A673 (cell line): ENCODE measurements at regions of chr16 and their contacts with region 1.

Region 1: DNA sequence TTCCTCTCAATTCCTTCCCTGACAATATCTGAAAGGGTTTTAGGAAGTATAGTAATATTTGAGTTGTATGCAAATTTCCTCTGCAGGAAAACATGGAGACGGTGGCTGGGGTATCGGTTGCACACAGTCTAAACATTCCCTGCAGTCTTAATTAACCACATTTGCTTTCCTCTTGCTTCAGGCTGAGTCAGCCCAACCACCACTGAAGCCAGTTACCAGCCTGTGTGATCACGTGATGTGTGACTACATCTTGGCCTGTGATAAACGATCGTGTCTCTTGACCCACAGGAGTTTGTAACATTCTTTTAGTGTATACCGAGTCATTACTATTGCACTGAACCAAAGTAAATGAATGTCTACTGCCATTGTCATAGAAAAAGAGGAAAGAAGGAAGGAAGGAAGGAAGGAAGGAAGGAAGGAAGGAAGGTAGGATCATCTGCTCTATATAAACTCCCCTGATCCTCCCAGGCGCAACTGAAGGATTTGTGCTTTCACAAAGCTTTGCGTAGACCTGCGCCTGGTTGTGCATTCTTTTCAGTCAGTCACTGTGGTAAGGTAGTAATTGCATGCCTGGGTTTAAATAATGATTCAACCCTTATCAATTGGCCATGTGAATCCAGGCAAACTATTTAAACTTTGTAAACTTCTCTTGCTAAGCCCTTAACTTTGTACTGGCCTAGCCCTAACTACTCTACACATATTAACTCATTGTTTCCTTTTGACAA is 280.6 kb upstream of the SALL1 start:
- DNase-seq: peak; percentile 97
- H3K4me3 ChIP-seq: no peak overlapping the region
- H3K27ac ChIP-seq: peak overlapping the region; percentile 87
- H3K4me1 ChIP-seq: peaks cover 35% of the 10 kb centered on the region
- H3K27me3 ChIP-seq: no peaks in the 10 kb centered on the region
- CTCF ChIP-seq: no peak

Region 2: GRCh38 chr16:50830698-50831097 is 601.0 kb before region 1 on chr16:
- CTCF ChIA-PET with region 1: no interaction called
- POLR2A ChIA-PET with region 1: no interaction called
- intact Hi-C with region 1: no loop called
- DNase-seq: no peak
- H3K4me3 ChIP-seq: no peak overlapping the region
- H3K27ac ChIP-seq: no peak overlapping the region
- H3K4me1 ChIP-seq: no peaks in the 10 kb centered on the region
- H3K27me3 ChIP-seq: peaks cover 17% of the 10 kb centered on the region
- CTCF ChIP-seq: no peak

Region 3: GRCh38 chr16:51151961-51152663 is 279.6 kb before region 1 on chr16:
- CTCF ChIA-PET with region 1: no interaction called
- POLR2A ChIA-PET with region 1: no interaction called
- intact Hi-C with region 1: loop called (anchors 5 kb)
- DNase-seq: peak; percentile 88
- H3K4me3 ChIP-seq: peak overlapping the region; percentile 70
- H3K27ac ChIP-seq: peak overlapping the region; percentile 68
- H3K4me1 ChIP-seq: peaks cover 19% of the 10 kb centered on the region
- H3K27me3 ChIP-seq: peaks cover 41% of the 10 kb centered on the region
- CTCF ChIP-seq: no peak

Region 4: GRCh38 chr16:51569203-51569931 is 137.7 kb after region 1 on chr16:
- CTCF ChIA-PET with region 1: no interaction called
- POLR2A ChIA-PET with region 1: no interaction called
- intact Hi-C with region 1: loop called (anchors 2 kb)
- DNase-seq: peak; percentile 97
- H3K4me3 ChIP-seq: no peak overlapping the region
- H3K27ac ChIP-seq: peak overlapping the region; percentile 46
- H3K4me1 ChIP-seq: peaks cover 32% of the 10 kb centered on the region
- H3K27me3 ChIP-seq: no peaks in the 10 kb centered on the region
- CTCF ChIP-seq: no peak

Region 5: GRCh38 chr16:51624080-51624775 is 192.5 kb after region 1 on chr16:
- CTCF ChIA-PET with region 1: no interaction called
- POLR2A ChIA-PET with region 1: no interaction called
- intact Hi-C with region 1: loop called (anchors 5 kb)
- DNase-seq: peak; percentile 93
- H3K4me3 ChIP-seq: no peak overlapping the region
- H3K27ac ChIP-seq: peak overlapping the region; percentile 72
- H3K4me1 ChIP-seq: peaks cover 24% of the 10 kb centered on the region
- H3K27me3 ChIP-seq: no peaks in the 10 kb centered on the region
- CTCF ChIP-seq: no peak

Region 6: GRCh38 chr16:51762081-51762996 is 330.7 kb after region 1 on chr16:
- CTCF ChIA-PET with region 1: no interaction called
- POLR2A ChIA-PET with region 1: no interaction called
- intact Hi-C with region 1: loop called (anchors 1 kb)
- DNase-seq: peak; percentile 92
- H3K4me3 ChIP-seq: peak overlapping the region; percentile 13
- H3K27ac ChIP-seq: peak overlapping the region; percentile 34
- H3K4me1 ChIP-seq: peaks cover 55% of the 10 kb centered on the region
- H3K27me3 ChIP-seq: no peaks in the 10 kb centered on the region
- CTCF ChIP-seq: peak; percentile 98

Region 7: GRCh38 chr16:51773521-51773920 is 341.8 kb after region 1 on chr16:
- CTCF ChIA-PET with region 1: no interaction called
- POLR2A ChIA-PET with region 1: no interaction called
- intact Hi-C with region 1: no loop called
- DNase-seq: no peak
- H3K4me3 ChIP-seq: no peak overlapping the region
- H3K27ac ChIP-seq: no peak overlapping the region
- H3K4me1 ChIP-seq: no peaks in the 10 kb centered on the region
- H3K27me3 ChIP-seq: no peaks in the 10 kb centered on the region
- CTCF ChIP-seq: no peak

Region 8: GRCh38 chr16:51971184-51971583 is 539.5 kb after region 1 on chr16:
- CTCF ChIA-PET with region 1: no interaction called
- POLR2A ChIA-PET with region 1: no interaction called
- intact Hi-C with region 1: loop called (anchors 5 kb)
- DNase-seq: peak; percentile 74
- H3K4me3 ChIP-seq: no peak overlapping the region
- H3K27ac ChIP-seq: no peak overlapping the region
- H3K4me1 ChIP-seq: peaks cover 49% of the 10 kb centered on the region
- H3K27me3 ChIP-seq: no peaks in the 10 kb centered on the region
- CTCF ChIP-seq: peak; percentile 82

Region 9: GRCh38 chr16:51982715-51983680 is 551.3 kb after region 1 on chr16:
- CTCF ChIA-PET with region 1: no interaction called
- POLR2A ChIA-PET with region 1: no interaction called
- intact Hi-C with region 1: loop called (anchors 5 kb)
- DNase-seq: peak; percentile 88
- H3K4me3 ChIP-seq: no peak overlapping the region
- H3K27ac ChIP-seq: no peak overlapping the region
- H3K4me1 ChIP-seq: no peaks in the 10 kb centered on the region
- H3K27me3 ChIP-seq: no peaks in the 10 kb centered on the region
- CTCF ChIP-seq: peak; percentile 84